HepG2 (cell line): ENCODE measurements at regions of chr7 and their contacts with region 1.

Region 1: GRCh38 chr7:156612930-156613329 is 27.6 kb upstream of the RNF32 start:
- DNase-seq: no peak
- ATAC-seq: no peak
- H3K4me3 ChIP-seq: no peak overlapping the region
- H3K27ac ChIP-seq: peak overlapping the region; percentile 100
- H3K4me1 ChIP-seq: peaks cover 86% of the 10 kb centered on the region
- H3K27me3 ChIP-seq: no peaks in the 10 kb centered on the region
- CTCF ChIP-seq: no peak
- EP300 ChIP-seq: no peak
- POLR2A ChIP-seq: no peak
- RAD21 ChIP-seq: no peak

Region 2: GRCh38 chr7:155555116-155555695 is 1057.7 kb before region 1 on chr7:
- CTCF ChIA-PET with region 1: no interaction called
- POLR2A ChIA-PET with region 1: no interaction called
- in situ Hi-C with region 1: no loop called
- intact Hi-C with region 1: no loop called
- DNase-seq: no peak
- ATAC-seq: no peak
- H3K4me3 ChIP-seq: no peak overlapping the region
- H3K27ac ChIP-seq: no peak overlapping the region
- H3K4me1 ChIP-seq: no peaks in the 10 kb centered on the region
- H3K27me3 ChIP-seq: peaks cover 3 to 30% of the 10 kb centered on the region in 2 experiments; a peak in 4 of 5 replicates
- CTCF ChIP-seq: no peak
- EP300 ChIP-seq: no peak
- POLR2A ChIP-seq: no peak
- RAD21 ChIP-seq: no peak

Region 3: GRCh38 chr7:156473476-156474240 is 139.3 kb before region 1 on chr7:
- CTCF ChIA-PET with region 1: no interaction called
- POLR2A ChIA-PET with region 1: interaction called, 22 read pairs
- in situ Hi-C with region 1: no loop called
- intact Hi-C with region 1: no loop called
- DNase-seq: peak; percentile 25
- ATAC-seq: peak; percentile 72
- H3K4me3 ChIP-seq: peak overlapping the region in 2 of 3 experiments; percentile 25 to 32; a peak in 3 of 6 replicates
- H3K27ac ChIP-seq: peak overlapping the region; percentile 54
- H3K4me1 ChIP-seq: peaks cover 34% of the 10 kb centered on the region
- H3K27me3 ChIP-seq: no peaks in the 10 kb centered on the region
- CTCF ChIP-seq: peak; percentile 80
- EP300 ChIP-seq: no peak
- POLR2A ChIP-seq: no peak
- RAD21 ChIP-seq: peak; percentile 70; the same call in 1 of the 2 replicates

Region 4: DNA sequence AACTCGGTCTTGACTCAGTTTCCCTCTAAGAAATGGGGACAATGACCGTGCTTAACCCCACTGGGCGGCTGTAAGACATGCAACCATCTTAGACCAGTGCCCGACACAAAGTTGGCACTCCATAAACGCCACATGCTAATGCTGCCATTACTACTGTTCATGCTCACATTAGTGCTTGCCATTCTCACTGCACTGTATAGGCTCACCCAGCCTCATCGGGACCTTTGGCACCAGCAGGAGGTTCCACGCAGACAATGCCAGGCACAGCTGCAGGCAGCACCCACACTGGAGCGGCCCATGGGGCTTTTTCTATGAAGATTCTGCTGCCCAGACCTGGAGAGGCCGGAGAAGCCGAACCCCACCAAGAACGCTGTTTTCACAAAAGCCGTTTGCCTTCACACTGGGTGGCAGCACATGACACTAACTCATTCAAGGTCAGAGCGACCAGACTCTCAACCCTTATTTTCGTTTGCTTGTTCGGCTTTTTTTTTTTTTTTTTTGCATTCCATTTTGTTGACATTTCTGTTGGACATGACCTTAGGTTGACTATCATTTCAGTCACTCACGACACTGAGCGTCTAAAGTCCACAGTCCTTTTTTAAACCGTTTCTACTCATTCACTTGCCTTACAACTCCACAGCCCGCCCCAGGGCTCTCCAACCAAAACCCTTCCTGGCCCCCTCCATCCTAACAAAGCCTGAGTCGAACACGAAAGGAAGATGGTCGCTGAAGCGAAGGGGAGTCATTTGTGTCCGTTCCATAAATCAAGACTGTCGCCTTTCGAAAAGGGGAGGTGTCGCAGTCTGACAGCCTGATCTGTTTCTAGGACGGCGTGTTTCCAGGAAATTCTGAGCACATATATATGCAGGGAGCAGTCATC is 96.8 kb before region 1 on chr7:
- CTCF ChIA-PET with region 1: interaction called, 3 read pairs
- POLR2A ChIA-PET with region 1: interaction called, 22 read pairs
- in situ Hi-C with region 1: loop called (anchors 5 kb)
- intact Hi-C with region 1: loop called (anchors 1 kb)
- DNase-seq: peak; percentile 98
- ATAC-seq: peak; percentile 92
- H3K4me3 ChIP-seq: peak overlapping the region; percentile 47 to 81 (median 55); a peak in 5 of 6 replicates
- H3K27ac ChIP-seq: peak overlapping the region; percentile 85
- H3K4me1 ChIP-seq: peaks cover 47% of the 10 kb centered on the region
- H3K27me3 ChIP-seq: no peaks in the 10 kb centered on the region
- CTCF ChIP-seq: peak; percentile 74
- EP300 ChIP-seq: peak; percentile 58 to 87; a peak in 3 of 4 replicates
- POLR2A ChIP-seq: peak; percentile 56 to 63
- RAD21 ChIP-seq: no peak

Region 5: GRCh38 chr7:156527458-156527890 is 85.5 kb before region 1 on chr7:
- CTCF ChIA-PET with region 1: no interaction called
- POLR2A ChIA-PET with region 1: interaction called, 28 read pairs
- in situ Hi-C with region 1: no loop called
- intact Hi-C with region 1: no loop called
- DNase-seq: peak; percentile 62
- ATAC-seq: peak; percentile 79
- H3K4me3 ChIP-seq: no peak overlapping the region
- H3K27ac ChIP-seq: peak overlapping the region; percentile 6
- H3K4me1 ChIP-seq: peaks cover 66% of the 10 kb centered on the region
- H3K27me3 ChIP-seq: no peaks in the 10 kb centered on the region
- CTCF ChIP-seq: no peak
- EP300 ChIP-seq: peak in 1 of 2 experiments; percentile 73; a peak in 2 of 4 replicates
- POLR2A ChIP-seq: peak in 1 of 2 experiments; percentile 47; a peak in 1 of 4 replicates
- RAD21 ChIP-seq: no peak

Region 6: GRCh38 chr7:156625580-156625979 is 12.7 kb after region 1 on chr7:
- CTCF ChIA-PET with region 1: no interaction called
- POLR2A ChIA-PET with region 1: interaction called, 14 read pairs
- in situ Hi-C with region 1: no loop called
- intact Hi-C with region 1: no loop called
- DNase-seq: peak; percentile 56
- ATAC-seq: peak; percentile 84
- H3K4me3 ChIP-seq: no peak overlapping the region
- H3K27ac ChIP-seq: peak overlapping the region; percentile 36
- H3K4me1 ChIP-seq: peaks cover 16% of the 10 kb centered on the region
- H3K27me3 ChIP-seq: no peaks in the 10 kb centered on the region
- CTCF ChIP-seq: no peak
- EP300 ChIP-seq: no peak
- POLR2A ChIP-seq: no peak
- RAD21 ChIP-seq: no peak

Region 7: DNA sequence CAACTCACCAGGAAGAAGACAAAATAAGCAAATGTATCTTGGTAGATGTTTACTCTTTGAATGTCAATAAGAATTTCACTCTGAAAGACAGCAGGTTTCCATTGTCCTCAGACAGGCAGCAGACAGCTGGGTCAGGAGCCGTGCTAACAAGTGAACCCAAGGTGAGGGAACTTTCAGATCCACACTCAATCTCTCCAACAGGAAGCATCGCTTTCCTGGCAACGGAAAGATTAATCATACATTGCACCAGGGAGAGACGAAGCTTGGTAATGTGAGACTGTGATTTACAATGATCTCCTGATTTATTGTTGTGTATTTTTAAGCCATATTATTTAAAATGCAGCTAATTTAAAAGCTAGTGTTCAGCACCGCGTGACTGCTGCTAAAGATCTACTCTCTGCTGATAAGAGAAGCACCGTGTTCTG is 319.0 kb after region 1 on chr7:
- CTCF ChIA-PET with region 1: no interaction called
- POLR2A ChIA-PET with region 1: no interaction called
- in situ Hi-C with region 1: no loop called
- intact Hi-C with region 1: no loop called
- DNase-seq: no peak
- ATAC-seq: peak; percentile 49; the same call in 2 of the 3 replicates
- H3K4me3 ChIP-seq: no peak overlapping the region
- H3K27ac ChIP-seq: no peak overlapping the region
- H3K4me1 ChIP-seq: peaks cover 6% of the 10 kb centered on the region
- H3K27me3 ChIP-seq: peaks cover 2 to 39% of the 10 kb centered on the region in 2 experiments; a peak in 3 of 5 replicates
- CTCF ChIP-seq: no peak
- EP300 ChIP-seq: no peak
- POLR2A ChIP-seq: no peak
- RAD21 ChIP-seq: no peak